ENCODE measurements at regions of chr14 and their contacts with region 1.

Region 1: DNA sequence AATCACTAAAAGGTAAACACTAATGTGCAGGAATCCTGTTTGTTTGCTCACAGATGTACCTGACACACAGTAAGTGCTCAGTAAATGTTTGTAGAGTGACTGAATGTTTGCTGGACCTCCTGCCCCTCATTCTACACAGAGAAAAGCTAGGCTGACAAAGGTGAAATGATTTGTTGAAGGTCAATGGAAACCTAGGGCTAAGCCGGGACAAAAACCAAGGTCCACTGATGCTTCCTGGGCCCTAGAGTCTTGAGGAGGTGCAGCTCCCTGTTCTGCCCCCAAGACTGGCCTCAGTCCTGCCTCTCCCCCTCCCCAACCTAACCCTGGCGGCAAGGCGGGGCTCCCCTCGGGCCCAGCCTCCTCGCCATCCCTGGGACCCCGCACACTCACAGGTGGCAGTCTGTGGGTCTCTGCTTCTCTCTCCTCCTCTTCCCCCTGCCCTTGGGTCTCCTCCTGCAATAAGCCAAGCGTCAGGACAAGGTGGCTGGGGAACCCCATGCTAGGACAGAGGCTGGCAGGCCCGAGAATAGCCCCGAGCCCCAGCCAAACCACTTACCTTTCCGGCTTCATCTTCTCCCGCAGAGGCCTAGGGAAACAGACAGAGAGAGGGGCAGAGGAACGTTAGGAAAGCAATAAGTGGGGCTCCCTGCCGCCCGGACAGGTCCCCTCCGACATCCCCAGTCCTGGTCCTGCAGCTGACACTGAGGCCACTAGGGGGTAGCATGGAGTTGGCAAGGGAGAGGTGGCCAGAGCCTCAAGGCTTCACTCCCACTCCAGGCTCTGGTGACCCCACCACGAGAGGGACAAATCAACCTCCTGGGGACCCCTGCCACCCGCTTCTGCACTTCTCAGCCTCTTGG is 9.3 kb downstream of the PGF start:
- DNase-seq: peak; percentile 87
- ATAC-seq: peak; percentile 82
- H3K4me3 Mint-ChIP-seq: no peak overlapping the region
- H3K27ac Mint-ChIP-seq: no peak overlapping the region
- H3K4me1 Mint-ChIP-seq: peaks cover 14% of the 10 kb centered on the region
- H3K27me3 Mint-ChIP-seq: no peaks in the 10 kb centered on the region
- CTCF ChIP-seq: peak; percentile 92

Region 2: DNA sequence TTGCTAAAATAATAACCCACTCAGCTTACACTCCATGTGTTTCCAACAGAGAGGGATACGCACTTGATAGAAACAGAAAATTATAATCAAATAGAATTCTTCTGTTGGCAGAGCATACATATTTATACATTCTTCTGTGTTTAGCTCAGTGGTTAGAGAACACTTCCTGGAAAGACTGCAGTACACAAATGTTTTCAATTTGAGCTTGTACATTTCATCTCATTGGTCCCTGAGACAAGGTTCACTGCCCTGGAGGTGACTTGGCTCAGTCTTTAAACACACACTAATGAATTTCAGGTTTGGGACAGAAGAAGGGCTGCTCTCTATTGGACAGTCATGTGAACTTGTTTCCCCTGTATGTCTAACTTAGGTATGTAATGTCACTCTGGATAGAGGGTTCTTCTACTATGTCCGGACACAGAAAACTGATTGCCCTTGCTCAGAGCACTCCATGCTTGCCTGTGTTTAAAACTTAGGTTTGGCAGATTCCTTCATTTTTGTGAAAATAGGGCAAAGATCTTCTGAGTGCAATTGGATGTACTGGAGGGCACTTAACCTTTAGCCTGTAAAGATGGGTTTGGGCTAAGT is 93.0 kb before region 1 on chr14:
- CTCF ChIA-PET with region 1: interaction called, 15 read pairs
- POLR2A ChIA-PET with region 1: no interaction called
- intact Hi-C with region 1: no loop called
- DNase-seq: no peak
- ATAC-seq: peak; percentile 28
- H3K4me3 Mint-ChIP-seq: no peak overlapping the region
- H3K27ac Mint-ChIP-seq: no peak overlapping the region
- H3K4me1 Mint-ChIP-seq: peaks cover 15% of the 10 kb centered on the region
- H3K27me3 Mint-ChIP-seq: no peaks in the 10 kb centered on the region
- CTCF ChIP-seq: no peak

Region 3: GRCh38 chr14:74922739-74923401 is 23.2 kb before region 1 on chr14 and contains the start of gene RPS6KL1:
- CTCF ChIA-PET with region 1: interaction called, 19 read pairs
- POLR2A ChIA-PET with region 1: no interaction called
- intact Hi-C with region 1: no loop called
- DNase-seq: peak; percentile 88
- ATAC-seq: peak; percentile 99
- H3K4me3 Mint-ChIP-seq: peak within 1 kb of the TSS; percentile 68
- H3K27ac Mint-ChIP-seq: peak within 1 kb of the TSS; percentile 39
- H3K4me1 Mint-ChIP-seq: peaks cover 8% of the 10 kb centered on the region
- H3K27me3 Mint-ChIP-seq: peaks cover 8% of the 10 kb centered on the region
- CTCF ChIP-seq: no peak
- total RNA-seq, gene RPS6KL1: 4.1 to 5.1 TPM

Region 4: GRCh38 chr14:74963705-74964271 is 17.7 kb after region 1 on chr14:
- CTCF ChIA-PET with region 1: interaction called, 26 read pairs
- POLR2A ChIA-PET with region 1: interaction called, 4 read pairs
- intact Hi-C with region 1: no loop called
- DNase-seq: peak; percentile 26
- ATAC-seq: peak; percentile 51
- H3K4me3 Mint-ChIP-seq: no peak overlapping the region
- H3K27ac Mint-ChIP-seq: no peak overlapping the region
- H3K4me1 Mint-ChIP-seq: peaks cover 8% of the 10 kb centered on the region
- H3K27me3 Mint-ChIP-seq: peaks cover 3% of the 10 kb centered on the region
- CTCF ChIP-seq: no peak

Region 5: DNA sequence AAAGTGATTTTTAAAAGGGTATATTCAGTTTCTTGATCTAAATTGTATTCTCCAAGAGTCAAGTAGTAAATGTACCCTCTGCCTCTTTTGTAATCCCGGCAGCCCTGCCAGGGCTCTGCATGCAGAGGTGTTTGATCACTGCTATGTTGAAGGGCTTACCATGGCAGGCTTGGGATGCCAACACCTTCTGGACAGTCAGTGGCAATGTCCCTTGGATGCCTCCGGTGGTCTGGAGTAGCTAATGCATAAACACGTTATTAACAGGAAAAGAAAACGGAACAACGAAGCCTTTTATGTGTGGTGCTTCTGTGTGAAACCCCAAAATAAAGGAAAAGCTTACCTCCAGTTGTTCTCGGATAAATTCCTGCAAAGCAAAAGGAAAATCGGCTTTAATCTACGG is 76.6 kb after region 1 on chr14:
- CTCF ChIA-PET with region 1: interaction called, 11 read pairs
- POLR2A ChIA-PET with region 1: no interaction called
- intact Hi-C with region 1: no loop called
- DNase-seq: peak; percentile 26
- ATAC-seq: peak; percentile 58
- H3K4me3 Mint-ChIP-seq: no peak overlapping the region
- H3K27ac Mint-ChIP-seq: no peak overlapping the region
- H3K4me1 Mint-ChIP-seq: no peaks in the 10 kb centered on the region
- H3K27me3 Mint-ChIP-seq: no peaks in the 10 kb centered on the region
- CTCF ChIP-seq: peak; percentile 33